CD14-positive monocyte (primary cell): ENCODE measurements at regions of chr11 and their contacts with region 1.

Region 1: GRCh38 chr11:2898366-2899079 is 12.9 kb upstream of the CDKN1C start:
- DNase-seq: peak; percentile 94 to 98 (median 96)
- H3K4me3 ChIP-seq: peak overlapping the region in 2 of 3 experiments; percentile 1 to 70
- H3K4me3 Mint-ChIP-seq: peak overlapping the region; percentile 76 to 89
- H3K27ac ChIP-seq: peak overlapping the region; percentile 95 to 98
- H3K27ac Mint-ChIP-seq: peak overlapping the region; percentile 98 to 100 (median 99)
- H3K4me1 ChIP-seq: peaks cover 59 to 64% of the 10 kb centered on the region in 2 donors
- H3K4me1 Mint-ChIP-seq: peaks cover 57% of the 10 kb centered on the region
- H3K27me3 ChIP-seq: no peaks in the 10 kb centered on the region
- H3K27me3 Mint-ChIP-seq: peaks cover 3 to 12% (median 10%) of the 10 kb centered on the region in 3 donors
- CTCF ChIP-seq: no peak

Region 2: DNA sequence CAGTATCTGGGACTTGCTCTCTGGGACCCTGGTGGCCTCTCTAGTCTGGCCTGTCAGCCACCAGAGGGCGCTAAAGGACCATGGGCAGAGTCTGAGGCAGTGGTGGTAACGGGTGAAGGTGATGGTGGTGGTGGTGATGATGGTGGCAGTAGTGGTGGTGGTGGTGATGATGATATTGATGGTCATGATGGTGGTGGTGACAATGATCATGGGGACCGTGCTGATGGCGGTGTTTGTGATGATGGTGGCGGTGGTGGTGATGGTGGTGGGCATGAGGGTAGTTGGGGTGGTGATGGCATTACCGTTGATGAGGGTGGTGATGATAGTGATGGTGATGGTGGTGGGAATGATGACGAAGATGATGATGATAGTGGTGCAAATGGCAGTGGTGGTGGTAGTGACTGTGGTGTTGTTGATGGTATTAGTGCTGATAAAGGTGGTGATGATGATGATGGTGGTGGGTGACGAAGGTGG is 470.2 kb before region 1 on chr11:
- intact Hi-C with region 1: no loop called
- DNase-seq: peak; percentile 72 to 80 (median 74)
- H3K4me3 ChIP-seq: no peak overlapping the region
- H3K4me3 Mint-ChIP-seq: no peak overlapping the region
- H3K27ac ChIP-seq: no peak overlapping the region
- H3K27ac Mint-ChIP-seq: no peak overlapping the region
- H3K4me1 ChIP-seq: no peaks in the 10 kb centered on the region
- H3K4me1 Mint-ChIP-seq: no peaks in the 10 kb centered on the region
- H3K27me3 ChIP-seq: no peaks in the 10 kb centered on the region
- H3K27me3 Mint-ChIP-seq: peaks cover 0 to 8% (median 7%) of the 10 kb centered on the region in 3 donors
- CTCF ChIP-seq: peak; percentile 91

Region 3: GRCh38 chr11:2930704-2931428 is 32.3 kb after region 1 on chr11:
- intact Hi-C with region 1: loop called (anchors 2 to 5 kb)
- DNase-seq: peak; percentile 43 to 63 (median 61)
- H3K4me3 ChIP-seq: peak overlapping the region; percentile 38 to 73 (median 63)
- H3K4me3 Mint-ChIP-seq: peak overlapping the region; percentile 87 to 92
- H3K27ac ChIP-seq: peak overlapping the region; percentile 61 to 92
- H3K27ac Mint-ChIP-seq: peak overlapping the region; percentile 73 to 97 (median 96)
- H3K4me1 ChIP-seq: peaks cover 50 to 66% of the 10 kb centered on the region in 2 donors
- H3K4me1 Mint-ChIP-seq: peaks cover 41% of the 10 kb centered on the region
- H3K27me3 ChIP-seq: peaks cover 8 to 32% of the 10 kb centered on the region in 2 donors
- H3K27me3 Mint-ChIP-seq: peaks cover 32 to 53% (median 35%) of the 10 kb centered on the region in 3 donors
- CTCF ChIP-seq: peak; percentile 92

Region 4: GRCh38 chr11:3160252-3161031 is 261.9 kb after region 1 on chr11:
- intact Hi-C with region 1: no loop called
- DNase-seq: peak in 1 of 3 donors; percentile 39
- H3K4me3 ChIP-seq: peak overlapping the region; percentile 7 to 60 (median 7)
- H3K4me3 Mint-ChIP-seq: peak overlapping the region; percentile 73 to 83
- H3K27ac ChIP-seq: no peak overlapping the region
- H3K27ac Mint-ChIP-seq: peak overlapping the region in 2 of 7 donors; percentile 8 to 30
- H3K4me1 ChIP-seq: peaks cover 61 to 92% of the 10 kb centered on the region in 2 donors
- H3K4me1 Mint-ChIP-seq: peaks cover 81% of the 10 kb centered on the region
- H3K27me3 ChIP-seq: no peaks in the 10 kb centered on the region
- H3K27me3 Mint-ChIP-seq: peaks cover 1 to 4% (median 4%) of the 10 kb centered on the region in 3 donors
- CTCF ChIP-seq: no peak